Activated naive CD4-positive, alpha-beta T cell treated with anti-CD3 and anti-CD28 coated beads for 36 hours (primary cell): ENCODE measurements at regions of chr16 and their contacts with region 1.

Region 1: DNA sequence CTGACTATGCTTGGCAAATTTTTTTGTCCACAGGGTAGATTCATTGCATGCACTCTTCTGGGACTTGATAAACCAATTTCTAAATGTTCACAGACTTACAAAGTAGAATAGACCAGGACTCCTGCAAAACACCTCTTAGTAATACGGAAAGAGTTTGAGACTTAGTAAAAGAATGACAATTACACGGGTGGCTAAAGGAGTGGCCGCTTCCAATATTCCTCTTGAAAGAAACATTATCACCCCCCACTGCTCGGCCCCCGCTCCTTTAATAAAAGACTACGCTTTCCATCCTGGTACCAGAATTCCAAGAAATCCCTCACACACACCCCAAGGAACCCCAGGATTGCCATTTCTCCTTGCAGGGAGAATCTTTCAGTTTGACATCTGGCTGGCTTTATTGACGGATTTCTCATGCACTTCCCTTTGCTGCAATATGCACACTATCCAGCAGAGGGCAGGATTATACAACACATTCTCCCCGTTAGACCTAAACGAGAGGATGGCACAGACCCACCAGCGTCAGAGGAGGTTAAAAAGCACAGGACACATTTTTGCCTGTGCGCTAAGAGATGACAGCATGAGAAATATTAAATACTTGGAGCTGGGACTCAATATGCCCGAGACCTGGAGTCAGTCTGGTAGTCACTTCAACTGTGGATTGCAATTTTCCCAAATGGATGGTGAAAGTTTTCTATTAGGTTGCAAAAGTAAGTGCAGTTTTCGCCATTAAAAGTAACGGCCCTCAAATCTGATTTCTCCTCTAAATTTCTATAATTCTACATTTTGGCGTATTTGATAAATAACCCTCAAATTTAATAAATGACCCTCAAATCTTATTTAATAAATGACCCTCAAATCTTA is 46.6 kb upstream of the NUDT7 start:
- DNase-seq: peak; percentile 79
- H3K4me3 Mint-ChIP-seq: no peak overlapping the region
- H3K27ac Mint-ChIP-seq: no peak overlapping the region
- H3K4me1 Mint-ChIP-seq: no peaks in the 10 kb centered on the region
- H3K27me3 Mint-ChIP-seq: peaks cover 4% of the 10 kb centered on the region

Region 2: DNA sequence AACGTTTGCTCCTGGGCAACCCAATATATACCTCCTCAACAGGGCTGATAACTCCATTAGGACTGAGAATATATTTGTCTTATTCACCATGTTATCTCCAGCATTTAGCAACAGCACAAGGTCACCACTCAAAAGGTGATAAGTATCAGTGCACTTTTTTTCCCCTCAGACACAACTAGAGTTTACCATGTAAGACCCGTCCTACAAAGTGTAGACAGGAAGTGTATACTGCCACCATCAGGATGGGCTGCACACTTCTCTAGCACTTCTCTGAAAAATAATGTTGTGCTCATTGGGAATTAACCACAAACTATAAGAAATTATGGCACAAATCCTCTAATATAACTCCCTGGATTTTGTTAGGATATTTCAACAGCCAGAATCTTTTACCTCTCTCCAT is 107.0 kb after region 1 on chr16:
- CTCF ChIA-PET with region 1: interaction called, 3 read pairs
- intact Hi-C with region 1: loop called (anchors 1 kb)
- DNase-seq: no peak
- H3K4me3 Mint-ChIP-seq: no peak overlapping the region
- H3K27ac Mint-ChIP-seq: no peak overlapping the region
- H3K4me1 Mint-ChIP-seq: no peaks in the 10 kb centered on the region
- H3K27me3 Mint-ChIP-seq: peaks cover 30% of the 10 kb centered on the region

Region 3: DNA sequence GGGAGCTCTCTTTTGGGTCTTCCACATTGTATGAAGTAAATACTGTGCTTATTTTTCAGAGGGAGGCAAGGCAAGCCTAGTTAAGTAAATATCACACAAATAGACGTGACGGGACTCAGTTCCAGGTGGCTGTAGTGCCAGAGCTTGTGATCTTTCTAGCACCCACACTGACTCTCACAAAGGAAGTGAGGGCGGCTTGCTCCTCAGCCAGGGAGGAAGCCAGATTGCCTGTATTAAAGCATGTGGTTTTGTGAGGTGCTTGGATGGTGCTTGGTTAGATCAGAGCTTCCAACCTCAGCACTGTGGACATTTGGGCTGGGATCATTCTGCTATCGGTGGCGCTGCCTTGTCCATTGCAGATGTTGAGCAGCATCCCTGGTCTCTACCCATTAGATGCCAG is 192.8 kb after region 1 on chr16:
- CTCF ChIA-PET with region 1: no interaction called
- intact Hi-C with region 1: no loop called
- DNase-seq: peak; percentile 26
- H3K4me3 Mint-ChIP-seq: no peak overlapping the region
- H3K27ac Mint-ChIP-seq: no peak overlapping the region
- H3K4me1 Mint-ChIP-seq: peaks cover 14% of the 10 kb centered on the region
- H3K27me3 Mint-ChIP-seq: peaks cover 7% of the 10 kb centered on the region

Region 4: GRCh38 chr16:77971306-77972271 is 295.9 kb after region 1 on chr16:
- CTCF ChIA-PET with region 1: interaction called, 53 read pairs
- intact Hi-C with region 1: loop called (anchors 1 kb)
- DNase-seq: peak; percentile 85
- H3K4me3 Mint-ChIP-seq: no peak overlapping the region
- H3K27ac Mint-ChIP-seq: no peak overlapping the region
- H3K4me1 Mint-ChIP-seq: peaks cover 3% of the 10 kb centered on the region
- H3K27me3 Mint-ChIP-seq: peaks cover 14% of the 10 kb centered on the region

Region 5: DNA sequence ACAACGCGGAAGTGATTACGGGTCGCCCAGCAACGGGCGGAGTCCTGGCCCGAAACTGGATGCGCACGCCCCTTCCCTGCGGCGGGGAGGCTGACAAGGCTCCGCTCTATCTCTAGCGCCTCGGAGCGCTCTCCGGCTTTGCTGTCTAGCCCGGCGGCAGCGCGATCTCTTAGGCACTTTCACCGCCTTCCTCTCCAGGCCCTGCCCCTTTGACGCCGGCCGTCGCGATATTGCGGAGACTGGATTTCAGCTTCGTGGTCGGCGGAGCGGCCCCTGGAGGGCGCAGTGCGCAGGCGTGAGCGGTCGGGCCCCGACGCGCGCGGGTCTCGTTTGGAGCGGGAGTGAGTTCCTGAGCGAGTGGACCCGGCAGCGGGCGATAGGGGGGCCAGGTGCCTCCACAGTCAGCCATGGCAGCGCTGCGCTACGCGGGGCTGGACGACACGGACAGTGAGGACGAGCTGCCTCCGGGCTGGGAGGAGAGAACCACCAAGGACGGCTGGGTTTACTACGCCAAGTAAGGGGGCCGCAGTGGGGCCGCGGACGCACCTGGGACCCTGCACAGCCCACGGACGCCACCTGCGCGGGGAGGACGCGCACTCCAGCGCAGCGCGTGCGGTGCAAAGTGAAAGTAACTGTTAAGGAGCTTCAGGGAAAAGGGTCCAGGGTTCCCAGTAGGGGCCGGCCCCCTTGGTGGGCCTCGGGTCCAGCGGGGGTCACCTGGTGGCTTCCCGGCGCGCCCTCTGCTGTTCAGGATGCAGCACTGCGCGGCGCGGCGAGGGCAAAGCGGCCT is 423.9 kb after region 1 on chr16 and contains the start of gene WWOX:
- CTCF ChIA-PET with region 1: interaction called, 4 read pairs
- intact Hi-C with region 1: loop called (anchors 1 kb)
- DNase-seq: peak; percentile 95
- H3K4me3 Mint-ChIP-seq: peak within 1 kb of the TSS; percentile 84
- H3K27ac Mint-ChIP-seq: peak within 1 kb of the TSS; percentile 88
- H3K4me1 Mint-ChIP-seq: peaks cover 24% of the 10 kb centered on the region
- H3K27me3 Mint-ChIP-seq: peaks cover 3% of the 10 kb centered on the region
- total RNA-seq, gene WWOX: 20.2 to 21.4 TPM

Region 6: DNA sequence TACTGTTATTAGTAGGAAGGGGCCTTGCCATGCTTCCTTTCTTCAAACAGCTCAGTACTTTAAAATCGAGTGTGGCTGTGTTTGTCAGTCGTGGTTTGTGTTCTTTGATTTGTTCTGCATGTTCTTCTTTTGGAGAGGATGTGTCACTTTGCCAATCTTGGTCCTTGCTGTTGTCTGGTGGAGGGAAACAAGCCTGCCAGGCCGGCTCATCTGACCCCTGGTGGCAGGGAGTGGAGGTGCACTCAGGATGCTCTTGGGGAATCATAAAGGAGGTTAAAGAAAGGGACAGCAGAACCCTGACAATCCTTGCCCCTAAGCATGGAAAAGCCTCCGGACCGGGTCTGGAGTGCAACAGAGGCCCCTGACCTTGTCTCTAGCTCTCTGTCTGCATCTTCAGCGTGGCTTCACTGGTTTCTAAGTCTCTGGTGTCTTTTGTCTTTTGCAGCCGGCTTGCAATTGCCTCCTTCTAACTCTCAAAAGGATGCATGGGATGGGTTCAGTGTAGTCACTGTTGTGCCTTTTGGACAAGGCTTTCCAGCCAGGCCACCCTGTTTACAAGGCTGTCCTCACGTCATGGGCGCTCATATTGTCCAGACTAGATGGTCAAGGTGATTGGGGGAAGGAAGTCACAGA is 559.6 kb after region 1 on chr16:
- CTCF ChIA-PET with region 1: no interaction called
- intact Hi-C with region 1: loop called (anchors 5 kb)
- DNase-seq: peak; percentile 75
- H3K4me3 Mint-ChIP-seq: no peak overlapping the region
- H3K27ac Mint-ChIP-seq: no peak overlapping the region
- H3K4me1 Mint-ChIP-seq: no peaks in the 10 kb centered on the region
- H3K27me3 Mint-ChIP-seq: no peaks in the 10 kb centered on the region